Caco-2 (cell line): ENCODE measurements at regions of chr9 and their contacts with region 1.

Region 1: DNA sequence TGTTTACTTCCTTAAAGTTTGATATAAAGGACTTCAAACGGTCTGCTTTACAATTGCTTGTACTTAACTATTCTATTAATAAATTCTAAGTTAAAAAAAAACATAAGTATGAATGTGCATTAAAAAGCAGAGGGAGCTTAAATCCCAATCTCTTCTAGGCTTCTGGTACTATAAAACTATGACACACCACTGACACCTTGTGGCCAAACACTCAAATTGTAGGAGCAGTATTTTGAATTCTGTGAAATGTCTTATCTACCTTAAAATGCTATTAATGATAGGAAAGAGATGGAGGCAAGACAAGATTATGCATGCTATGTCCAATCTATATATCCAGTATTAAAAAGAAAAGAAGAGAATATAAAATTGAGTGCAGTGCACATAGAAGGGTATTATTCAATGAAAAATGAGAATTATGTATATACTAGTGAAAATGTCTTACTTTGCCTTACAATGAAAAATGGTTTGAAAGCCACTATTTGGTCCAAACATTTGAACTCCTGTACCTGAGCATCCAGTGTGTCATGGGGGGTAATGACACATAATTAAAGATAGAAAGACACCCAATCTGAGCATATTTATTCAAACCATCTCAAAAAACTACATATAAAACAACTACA is 87.6 kb downstream of the ERP44 start:
- DNase-seq: peak in 1 of 2 experiments; percentile 47
- H3K4me3 ChIP-seq: no peak overlapping the region
- H3K4me3 Mint-ChIP-seq: no peak overlapping the region
- H3K27ac Mint-ChIP-seq: no peak overlapping the region
- H3K4me1 ChIP-seq: no peaks in the 10 kb centered on the region
- H3K4me1 Mint-ChIP-seq: no peaks in the 10 kb centered on the region
- H3K27me3 ChIP-seq: no peaks in the 10 kb centered on the region
- H3K27me3 Mint-ChIP-seq: no peaks in the 10 kb centered on the region
- CTCF ChIP-seq: peak; percentile 39 to 51

Region 2: DNA sequence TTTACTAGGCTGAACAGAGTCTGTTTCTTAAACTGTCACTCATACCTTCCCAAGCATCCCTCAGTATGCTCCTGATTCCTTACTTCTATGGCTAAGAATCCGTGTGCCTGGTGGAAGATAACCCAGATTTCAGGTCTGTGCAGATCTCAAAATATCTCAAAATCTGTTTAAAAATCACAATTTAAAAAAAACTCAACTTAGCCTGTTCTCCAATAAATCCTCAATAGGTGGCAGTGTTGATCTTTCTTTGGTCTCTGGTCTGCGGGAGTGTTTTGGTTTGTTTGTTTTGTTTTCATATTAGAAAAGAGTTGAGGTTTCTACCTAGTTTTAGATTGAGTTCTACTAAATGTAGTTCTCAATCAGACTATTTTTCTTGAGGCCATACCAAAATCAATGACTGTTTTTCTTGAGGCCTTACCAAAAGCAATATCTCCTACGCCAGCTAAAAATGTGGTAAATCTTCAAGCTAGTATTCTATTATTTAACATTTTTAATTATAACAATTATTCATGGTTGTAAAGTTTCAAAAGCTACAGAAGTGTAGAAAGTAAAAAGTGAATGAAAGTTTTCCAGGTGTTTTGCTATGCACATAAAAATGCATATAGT is 848.3 kb before region 1 on chr9:
- CTCF ChIA-PET with region 1: no interaction called
- POLR2A ChIA-PET with region 1: no interaction called
- intact Hi-C with region 1: loop called (anchors 5 kb)
- DNase-seq: peak in 1 of 2 experiments; percentile 47
- H3K4me3 ChIP-seq: no peak overlapping the region
- H3K4me3 Mint-ChIP-seq: no peak overlapping the region
- H3K27ac Mint-ChIP-seq: no peak overlapping the region
- H3K4me1 ChIP-seq: peaks cover 6% of the 10 kb centered on the region
- H3K4me1 Mint-ChIP-seq: peaks cover 5% of the 10 kb centered on the region
- H3K27me3 ChIP-seq: no peaks in the 10 kb centered on the region; the same call in 1 of the 2 replicates
- H3K27me3 Mint-ChIP-seq: peaks cover 4% of the 10 kb centered on the region
- CTCF ChIP-seq: peak in 1 of 2 experiments; percentile 50

Region 3: DNA sequence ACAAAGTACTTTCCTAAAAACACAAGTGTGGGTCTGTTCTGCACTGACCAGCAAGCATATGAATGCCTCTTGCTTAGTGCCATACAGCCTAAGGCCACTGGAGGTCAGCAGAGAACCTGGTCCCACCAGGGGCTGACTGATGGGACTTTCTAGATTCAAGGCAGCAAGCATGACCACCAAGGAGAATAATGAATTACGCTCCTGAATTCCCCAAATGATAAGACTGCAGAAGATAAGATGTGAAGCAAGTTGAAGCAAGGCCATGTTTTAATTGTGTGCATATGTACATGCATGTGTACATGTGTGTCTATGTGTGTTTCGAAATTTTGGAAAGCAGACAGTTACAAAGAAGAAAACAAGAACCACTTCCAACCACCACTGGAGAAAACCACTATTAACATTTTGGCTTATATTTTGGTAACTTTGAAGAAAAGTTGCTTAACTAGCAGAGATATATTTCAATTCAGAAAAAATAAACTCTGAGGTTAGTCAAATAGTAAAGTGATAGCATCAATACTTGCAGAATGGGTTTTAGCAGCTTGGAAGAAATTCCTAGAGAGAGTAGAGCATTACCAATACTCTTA is 17.1 kb after region 1 on chr9:
- CTCF ChIA-PET with region 1: no interaction called
- POLR2A ChIA-PET with region 1: no interaction called
- intact Hi-C with region 1: no loop called
- DNase-seq: peak; percentile 76 to 82
- H3K4me3 ChIP-seq: no peak overlapping the region
- H3K4me3 Mint-ChIP-seq: no peak overlapping the region
- H3K27ac Mint-ChIP-seq: no peak overlapping the region
- H3K4me1 ChIP-seq: no peaks in the 10 kb centered on the region
- H3K4me1 Mint-ChIP-seq: no peaks in the 10 kb centered on the region
- H3K27me3 ChIP-seq: no peaks in the 10 kb centered on the region
- H3K27me3 Mint-ChIP-seq: no peaks in the 10 kb centered on the region
- CTCF ChIP-seq: peak; percentile 84 to 95

Region 4: GRCh38 chr9:100038472-100038871 is 27.3 kb after region 1 on chr9:
- CTCF ChIA-PET with region 1: no interaction called
- POLR2A ChIA-PET with region 1: no interaction called
- intact Hi-C with region 1: no loop called
- DNase-seq: no peak
- H3K4me3 ChIP-seq: no peak overlapping the region
- H3K4me3 Mint-ChIP-seq: no peak overlapping the region
- H3K27ac Mint-ChIP-seq: no peak overlapping the region
- H3K4me1 ChIP-seq: no peaks in the 10 kb centered on the region
- H3K4me1 Mint-ChIP-seq: no peaks in the 10 kb centered on the region
- H3K27me3 ChIP-seq: no peaks in the 10 kb centered on the region
- H3K27me3 Mint-ChIP-seq: no peaks in the 10 kb centered on the region
- CTCF ChIP-seq: no peak